Activated naive CD4-positive, alpha-beta T cell treated with anti-CD3 and anti-CD28 coated beads for 36 hours (primary cell): ENCODE measurements at regions of chr2 and their contacts with region 1.

Region 1: GRCh38 chr2:158889135-158889853 is 79.1 kb upstream of the TANC1 start:
- DNase-seq: peak; percentile 12
- H3K4me3 Mint-ChIP-seq: no peak overlapping the region
- H3K27ac Mint-ChIP-seq: peak overlapping the region; percentile 21
- H3K4me1 Mint-ChIP-seq: peaks cover 19% of the 10 kb centered on the region
- H3K27me3 Mint-ChIP-seq: peaks cover 6% of the 10 kb centered on the region

Region 2: DNA sequence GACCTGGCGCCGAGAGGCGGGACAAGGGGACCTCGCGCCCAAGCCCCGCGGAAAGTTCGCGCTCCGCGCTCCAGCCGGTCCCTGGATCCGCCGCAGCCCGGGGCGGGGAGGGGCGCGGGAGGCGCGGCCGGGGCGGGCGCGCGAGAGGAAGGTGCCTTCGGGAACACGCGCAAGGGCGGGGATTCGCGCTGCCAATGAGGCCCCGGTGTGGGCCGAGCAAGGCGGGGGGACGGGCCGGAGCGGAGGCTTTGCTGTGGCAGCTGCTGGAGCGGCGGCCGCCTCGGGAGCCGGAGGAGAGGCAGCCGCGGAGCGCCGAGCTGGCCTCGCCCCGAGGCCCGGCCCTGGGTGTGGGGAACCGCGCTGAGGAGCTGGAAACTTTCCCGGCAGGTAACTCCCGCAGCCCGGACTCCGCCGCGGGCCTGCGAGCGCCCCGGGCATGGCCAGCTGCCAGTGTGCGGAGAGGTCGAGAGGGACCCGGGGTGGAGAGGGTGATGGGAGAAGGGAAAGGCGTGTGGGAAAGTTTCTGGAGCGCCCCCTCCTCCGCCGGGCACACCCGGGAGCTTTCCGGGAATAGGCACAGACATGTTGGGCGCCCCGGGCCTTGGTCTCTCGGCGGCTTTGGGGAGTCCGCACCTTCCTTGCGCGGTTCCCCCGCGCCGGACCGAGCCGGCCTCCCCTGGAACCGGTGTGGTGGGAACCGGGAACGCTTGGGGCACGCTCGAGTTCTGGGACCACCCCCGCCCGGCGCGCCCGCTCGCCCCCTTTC is 79.3 kb after region 1 on chr2 and contains the start of gene TANC1:
- CTCF ChIA-PET with region 1: no interaction called
- intact Hi-C with region 1: loop called (anchors 5 kb)
- DNase-seq: peak; percentile 85
- H3K4me3 Mint-ChIP-seq: peak within 1 kb of the TSS; percentile 80
- H3K27ac Mint-ChIP-seq: no peak within 1 kb of the TSS
- H3K4me1 Mint-ChIP-seq: peaks cover 14% of the 10 kb centered on the region
- H3K27me3 Mint-ChIP-seq: peaks cover 50% of the 10 kb centered on the region
- total RNA-seq, gene TANC1: 2.0 to 2.3 TPM

Region 3: GRCh38 chr2:159118115-159118858 is 229.0 kb after region 1 on chr2:
- CTCF ChIA-PET with region 1: interaction called, 10 read pairs
- intact Hi-C with region 1: loop called (anchors 1 kb)
- DNase-seq: peak; percentile 93
- H3K4me3 Mint-ChIP-seq: no peak overlapping the region
- H3K27ac Mint-ChIP-seq: no peak overlapping the region
- H3K4me1 Mint-ChIP-seq: peaks cover 4% of the 10 kb centered on the region
- H3K27me3 Mint-ChIP-seq: no peaks in the 10 kb centered on the region

Region 4: GRCh38 chr2:159185401-159186130 is 296.3 kb after region 1 on chr2:
- CTCF ChIA-PET with region 1: no interaction called
- intact Hi-C with region 1: loop called (anchors 1 kb)
- DNase-seq: peak; percentile 38
- H3K4me3 Mint-ChIP-seq: no peak overlapping the region
- H3K27ac Mint-ChIP-seq: no peak overlapping the region
- H3K4me1 Mint-ChIP-seq: no peaks in the 10 kb centered on the region
- H3K27me3 Mint-ChIP-seq: no peaks in the 10 kb centered on the region

Region 5: GRCh38 chr2:159755788-159756187 is 866.5 kb after region 1 on chr2:
- CTCF ChIA-PET with region 1: no interaction called
- intact Hi-C with region 1: loop called (anchors 1 kb)
- DNase-seq: peak; percentile 54
- H3K4me3 Mint-ChIP-seq: no peak overlapping the region
- H3K27ac Mint-ChIP-seq: no peak overlapping the region
- H3K4me1 Mint-ChIP-seq: peaks cover 22% of the 10 kb centered on the region
- H3K27me3 Mint-ChIP-seq: no peaks in the 10 kb centered on the region

Region 6: GRCh38 chr2:159807183-159808031 is 918.1 kb after region 1 on chr2:
- CTCF ChIA-PET with region 1: interaction called, 3 read pairs
- intact Hi-C with region 1: loop called (anchors 5 kb)
- DNase-seq: peak; percentile 43
- H3K4me3 Mint-ChIP-seq: no peak overlapping the region
- H3K27ac Mint-ChIP-seq: no peak overlapping the region
- H3K4me1 Mint-ChIP-seq: peaks cover 6% of the 10 kb centered on the region
- H3K27me3 Mint-ChIP-seq: no peaks in the 10 kb centered on the region

Region 7: GRCh38 chr2:159968279-159968900 is 1079.1 kb after region 1 on chr2:
- CTCF ChIA-PET with region 1: no interaction called
- intact Hi-C with region 1: loop called (anchors 5 kb)
- DNase-seq: peak; percentile 56
- H3K4me3 Mint-ChIP-seq: no peak overlapping the region
- H3K27ac Mint-ChIP-seq: no peak overlapping the region
- H3K4me1 Mint-ChIP-seq: no peaks in the 10 kb centered on the region
- H3K27me3 Mint-ChIP-seq: no peaks in the 10 kb centered on the region